ENCODE measurements at regions of chr2 and their contacts with region 1.

Region 1: GRCh38 chr2:175181104-175181876 is at the start of gene ATP5MC3:
- DNase-seq: peak; percentile 95
- H3K4me3 Mint-ChIP-seq: peak within 1 kb of the TSS; percentile 95
- H3K27ac Mint-ChIP-seq: peak within 1 kb of the TSS; percentile 95
- H3K4me1 Mint-ChIP-seq: peaks cover 29% of the 10 kb centered on the region
- H3K27me3 Mint-ChIP-seq: no peaks in the 10 kb centered on the region
- total RNA-seq, gene ATP5MC3: 346 to 347 TPM

Region 2: GRCh38 chr2:175036582-175037018 is 144.7 kb before region 1 on chr2:
- CTCF ChIA-PET with region 1: no interaction called
- POLR2A ChIA-PET with region 1: no interaction called
- intact Hi-C with region 1: loop called (anchors 5 kb)
- DNase-seq: no peak
- H3K4me3 Mint-ChIP-seq: no peak overlapping the region
- H3K27ac Mint-ChIP-seq: no peak overlapping the region
- H3K4me1 Mint-ChIP-seq: peaks cover 6% of the 10 kb centered on the region
- H3K27me3 Mint-ChIP-seq: no peaks in the 10 kb centered on the region

Region 3: GRCh38 chr2:175111200-175111657 is 70.1 kb before region 1 on chr2:
- CTCF ChIA-PET with region 1: interaction called, 3 read pairs
- POLR2A ChIA-PET with region 1: no interaction called
- intact Hi-C with region 1: loop called (anchors 2 kb)
- DNase-seq: no peak
- H3K4me3 Mint-ChIP-seq: no peak overlapping the region
- H3K27ac Mint-ChIP-seq: no peak overlapping the region
- H3K4me1 Mint-ChIP-seq: no peaks in the 10 kb centered on the region
- H3K27me3 Mint-ChIP-seq: no peaks in the 10 kb centered on the region

Region 4: GRCh38 chr2:175154661-175155082 is 26.6 kb before region 1 on chr2:
- CTCF ChIA-PET with region 1: no interaction called
- POLR2A ChIA-PET with region 1: interaction called, 3 read pairs
- intact Hi-C with region 1: loop called (anchors 2 kb)
- DNase-seq: no peak
- H3K4me3 Mint-ChIP-seq: no peak overlapping the region
- H3K27ac Mint-ChIP-seq: peak overlapping the region; percentile 75
- H3K4me1 Mint-ChIP-seq: peaks cover 46% of the 10 kb centered on the region
- H3K27me3 Mint-ChIP-seq: no peaks in the 10 kb centered on the region

Region 5: DNA sequence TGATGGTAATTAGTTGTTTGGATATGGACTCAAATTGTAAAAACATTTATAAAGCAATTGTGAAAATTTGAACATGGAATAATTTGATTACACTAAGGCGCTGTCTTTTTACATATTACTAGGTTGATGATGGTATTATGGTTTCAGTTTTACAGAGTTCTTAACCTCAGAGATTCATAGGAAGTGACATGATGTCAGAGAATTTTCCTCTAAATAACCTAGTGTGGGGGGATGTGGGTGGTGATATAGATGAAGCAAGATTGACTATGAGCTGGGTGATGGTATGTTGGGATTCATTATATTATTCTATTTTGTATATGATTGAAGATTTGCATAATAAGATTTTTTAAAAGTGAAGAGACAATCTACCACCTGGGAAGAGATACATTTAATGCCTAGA is 46.1 kb after region 1 on chr2:
- CTCF ChIA-PET with region 1: no interaction called
- POLR2A ChIA-PET with region 1: no interaction called
- intact Hi-C with region 1: loop called (anchors 2 kb)
- DNase-seq: no peak
- H3K4me3 Mint-ChIP-seq: no peak overlapping the region
- H3K27ac Mint-ChIP-seq: peak overlapping the region; percentile 46
- H3K4me1 Mint-ChIP-seq: peaks cover 18% of the 10 kb centered on the region
- H3K27me3 Mint-ChIP-seq: peaks cover 21% of the 10 kb centered on the region

Region 6: DNA sequence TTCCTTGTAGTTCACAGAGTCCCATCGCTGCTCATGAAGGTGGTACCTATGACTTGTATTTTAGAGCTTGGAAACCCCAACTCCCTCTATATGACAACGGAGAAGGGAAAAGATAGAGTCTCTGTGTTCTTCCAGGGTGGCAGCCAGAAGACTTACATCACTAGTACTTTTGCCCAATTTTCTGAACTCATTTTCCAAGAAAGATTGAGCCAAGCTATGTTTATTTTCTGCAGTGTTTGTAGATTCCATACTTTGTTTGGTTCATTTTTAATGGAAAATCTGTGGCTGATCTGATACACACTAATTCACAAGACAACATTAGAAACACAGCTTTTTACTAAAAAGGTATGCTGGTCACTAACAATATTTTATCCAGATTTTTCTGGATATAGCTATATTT is 60.4 kb after region 1 on chr2:
- CTCF ChIA-PET with region 1: no interaction called
- POLR2A ChIA-PET with region 1: no interaction called
- intact Hi-C with region 1: no loop called
- DNase-seq: no peak
- H3K4me3 Mint-ChIP-seq: no peak overlapping the region
- H3K27ac Mint-ChIP-seq: no peak overlapping the region
- H3K4me1 Mint-ChIP-seq: peaks cover 2% of the 10 kb centered on the region
- H3K27me3 Mint-ChIP-seq: peaks cover 23% of the 10 kb centered on the region

Measured in activated CD4-positive, alpha-beta memory T cell treated with anti-CD3 and anti-CD28 coated beads for 36 hours (primary cell).